Body of pancreas (tissue), 4 donors: ENCODE measurements at regions of chr12 and their contacts with region 1.

Region 1: GRCh38 chr12:104358347-104359003 is 54.9 kb downstream of the EID3 start:
- DNase-seq: peak; percentile 61 to 75 (median 70)
- ATAC-seq: peak; percentile 72
- H3K4me3 ChIP-seq: no peak overlapping the region
- H3K27ac ChIP-seq: no peak overlapping the region
- H3K4me1 ChIP-seq: no peaks in the 10 kb centered on the region
- H3K27me3 ChIP-seq: no peaks in the 10 kb centered on the region
- CTCF ChIP-seq: peak; percentile 77 to 89 (median 83)
- POLR2A ChIP-seq: no peak

Region 2: GRCh38 chr12:104207416-104208210 is 150.9 kb before region 1 on chr12:
- intact Hi-C with region 1: loop called (anchors 5 kb)
- DNase-seq: no peak
- ATAC-seq: no peak
- H3K4me3 ChIP-seq: no peak overlapping the region
- H3K27ac ChIP-seq: no peak overlapping the region
- H3K4me1 ChIP-seq: no peaks in the 10 kb centered on the region
- H3K27me3 ChIP-seq: no peaks in the 10 kb centered on the region
- CTCF ChIP-seq: no peak
- POLR2A ChIP-seq: no peak

Region 3: DNA sequence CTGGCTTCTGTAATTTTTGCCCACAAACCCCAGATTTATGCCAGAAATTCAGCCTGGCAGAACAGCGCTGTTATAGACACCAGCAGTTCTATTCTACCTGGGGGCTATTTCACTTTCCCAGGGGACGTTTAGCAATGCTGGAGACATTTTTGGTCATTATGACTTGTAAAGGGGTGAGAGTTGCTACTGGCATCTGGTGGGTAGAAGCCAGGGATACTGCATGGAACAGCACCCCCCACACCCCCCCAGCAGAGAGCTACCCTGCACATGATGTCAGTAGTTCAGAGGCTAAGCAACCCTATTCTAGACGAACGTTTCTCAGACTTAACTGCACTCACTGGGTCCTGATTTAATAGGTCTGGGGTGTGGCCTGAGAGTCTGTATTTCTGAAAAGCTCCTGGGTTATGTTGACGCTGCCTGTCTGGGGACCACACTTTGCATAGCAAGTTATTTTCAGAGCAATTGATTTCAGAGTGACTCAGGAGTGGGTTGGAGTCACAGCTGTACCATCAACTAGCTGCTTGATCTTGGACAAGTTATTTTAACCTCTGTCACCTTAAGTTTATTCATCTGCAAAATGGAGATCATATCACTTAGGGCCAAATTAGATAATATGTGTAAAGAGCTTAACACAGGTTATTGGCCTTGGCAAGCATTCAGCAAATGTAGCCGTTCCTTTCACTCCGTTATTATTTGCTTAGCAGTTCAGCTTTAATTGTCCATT is 146.8 kb after region 1 on chr12:
- intact Hi-C with region 1: no loop called
- DNase-seq: no peak
- ATAC-seq: no peak
- H3K4me3 ChIP-seq: no peak overlapping the region
- H3K27ac ChIP-seq: no peak overlapping the region
- H3K4me1 ChIP-seq: peaks cover 35% of the 10 kb centered on the region
- H3K27me3 ChIP-seq: no peaks in the 10 kb centered on the region
- CTCF ChIP-seq: no peak
- POLR2A ChIP-seq: no peak